Calu3 (cell line): ENCODE measurements at regions of chr10 and their contacts with region 1.

Region 1: GRCh38 chr10:33134011-33134751 is 176.2 kb upstream of the ITGB1 start:
- DNase-seq: peak; percentile 91
- H3K4me3 Mint-ChIP-seq: peak overlapping the region; percentile 28
- H3K27ac Mint-ChIP-seq: peak overlapping the region; percentile 100
- H3K4me1 Mint-ChIP-seq: peaks cover 67% of the 10 kb centered on the region
- H3K27me3 Mint-ChIP-seq: no peaks in the 10 kb centered on the region
- CTCF ChIP-seq: no peak

Region 2: GRCh38 chr10:32795598-32796183 is 338.5 kb before region 1 on chr10:
- CTCF ChIA-PET with region 1: no interaction called
- intact Hi-C with region 1: loop called (anchors 5 kb)
- DNase-seq: peak; percentile 23
- H3K4me3 Mint-ChIP-seq: no peak overlapping the region
- H3K27ac Mint-ChIP-seq: no peak overlapping the region
- H3K4me1 Mint-ChIP-seq: peaks cover 17% of the 10 kb centered on the region
- H3K27me3 Mint-ChIP-seq: no peaks in the 10 kb centered on the region
- CTCF ChIP-seq: peak; percentile 48

Region 3: DNA sequence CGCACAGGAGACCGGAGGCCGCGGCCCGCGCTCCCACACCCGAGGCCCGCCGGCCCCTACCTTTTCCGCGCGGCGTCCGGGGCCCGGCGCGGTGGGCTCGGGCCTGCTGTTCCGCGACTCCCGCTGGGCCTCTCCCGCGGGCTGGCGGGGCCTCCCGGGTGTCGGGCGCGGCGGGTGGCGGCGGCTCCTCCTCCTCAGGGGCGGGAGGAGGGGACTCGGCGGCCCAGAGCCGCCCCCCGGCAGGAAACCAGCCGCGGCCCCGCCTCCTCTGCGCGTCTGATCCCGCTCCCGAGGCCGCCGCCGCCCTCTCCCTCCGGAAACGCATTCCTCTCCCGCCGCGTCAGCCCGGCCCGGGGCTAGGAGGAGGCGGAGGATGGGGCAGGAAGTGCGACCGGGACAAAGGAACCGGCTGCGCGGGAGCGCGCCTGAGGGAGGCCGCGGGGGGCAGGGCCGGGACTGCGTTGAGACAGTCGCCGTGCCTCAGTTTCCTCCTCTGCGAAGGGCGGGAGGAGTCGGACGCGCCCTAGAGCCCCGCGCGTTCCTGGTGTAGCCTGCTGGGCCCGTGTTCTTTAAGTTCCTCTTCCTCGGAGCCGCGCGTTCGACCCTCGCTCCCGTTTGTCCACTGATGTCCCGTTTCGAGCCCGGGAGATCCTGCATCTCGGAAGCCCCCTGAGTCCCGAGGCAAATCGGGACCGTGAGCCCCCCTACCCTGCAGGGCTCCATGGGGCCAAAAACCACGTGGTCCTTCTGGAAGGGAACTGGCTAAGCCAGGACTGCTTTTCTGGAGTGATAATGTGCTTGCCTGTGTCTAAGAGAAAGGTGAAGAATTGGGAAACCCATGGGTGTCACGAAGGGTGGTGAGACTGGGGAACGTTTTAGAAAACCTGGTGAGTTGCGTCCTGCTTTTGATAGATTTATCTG is 175.8 kb before region 1 on chr10 and contains the start of gene ITGB1:
- CTCF ChIA-PET with region 1: no interaction called
- intact Hi-C with region 1: loop called (anchors 5 kb)
- DNase-seq: peak; percentile 99
- H3K4me3 Mint-ChIP-seq: peak within 1 kb of the TSS; percentile 98
- H3K27ac Mint-ChIP-seq: peak within 1 kb of the TSS; percentile 100
- H3K4me1 Mint-ChIP-seq: peaks cover 32% of the 10 kb centered on the region
- H3K27me3 Mint-ChIP-seq: no peaks in the 10 kb centered on the region
- CTCF ChIP-seq: no peak
- total RNA-seq, gene ITGB1: 1,388 and 1,455 TPM in 2 replicates

Region 4: DNA sequence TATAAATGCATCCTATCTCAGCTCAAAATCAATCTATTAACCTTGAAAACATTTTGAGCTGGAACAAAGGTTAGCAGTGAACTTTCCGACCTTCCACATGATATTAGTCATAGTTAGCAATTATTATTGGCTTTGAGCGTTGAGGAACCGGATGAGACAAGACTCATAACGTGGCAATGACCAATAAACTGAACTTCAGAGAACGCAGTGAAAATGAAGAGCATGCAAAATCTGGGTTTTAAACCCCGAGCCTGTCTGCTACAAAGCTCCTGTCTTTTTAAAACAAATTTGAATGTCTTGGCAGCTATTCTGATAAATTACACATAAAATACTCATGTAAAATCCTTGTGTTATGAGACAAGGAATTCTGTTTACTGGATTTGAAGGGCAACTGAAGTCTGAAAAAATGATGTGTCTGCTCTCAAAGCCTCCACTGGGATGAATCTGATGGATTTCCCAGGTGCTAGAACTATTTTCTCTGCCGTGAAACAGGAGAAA is 101.5 kb before region 1 on chr10:
- CTCF ChIA-PET with region 1: no interaction called
- intact Hi-C with region 1: loop called (anchors 5 kb)
- DNase-seq: peak; percentile 15
- H3K4me3 Mint-ChIP-seq: peak overlapping the region; percentile 17
- H3K27ac Mint-ChIP-seq: peak overlapping the region; percentile 58
- H3K4me1 Mint-ChIP-seq: peaks cover 42% of the 10 kb centered on the region
- H3K27me3 Mint-ChIP-seq: no peaks in the 10 kb centered on the region
- CTCF ChIP-seq: no peak

Region 5: GRCh38 chr10:33460505-33461294 is 326.5 kb after region 1 on chr10:
- CTCF ChIA-PET with region 1: no interaction called
- intact Hi-C with region 1: no loop called
- DNase-seq: no peak
- H3K4me3 Mint-ChIP-seq: no peak overlapping the region
- H3K27ac Mint-ChIP-seq: no peak overlapping the region
- H3K4me1 Mint-ChIP-seq: no peaks in the 10 kb centered on the region
- H3K27me3 Mint-ChIP-seq: no peaks in the 10 kb centered on the region
- CTCF ChIP-seq: no peak